Naive thymus-derived CD4-positive, alpha-beta T cell (primary cell): ENCODE measurements at regions of chr2 and their contacts with region 1.

Region 1: GRCh38 chr2:71226965-71227560 is at the start of gene PAIP2B:
- DNase-seq: peak; percentile 88 to 99 (median 99)
- ATAC-seq: peak; percentile 95
- H3K4me3 ChIP-seq: peak within 1 kb of the TSS; percentile 80
- H3K4me3 Mint-ChIP-seq: peak within 1 kb of the TSS; percentile 92 to 99 (median 97)
- H3K27ac ChIP-seq: peak within 1 kb of the TSS; percentile 82
- H3K27ac Mint-ChIP-seq: peak within 1 kb of the TSS; percentile 84 to 98 (median 92)
- H3K4me1 ChIP-seq: peaks cover 8 to 11% of the 10 kb centered on the region in 2 donors
- H3K4me1 Mint-ChIP-seq: peaks cover 13 to 34% (median 22%) of the 10 kb centered on the region in 7 donors
- H3K27me3 ChIP-seq: no peaks in the 10 kb centered on the region
- H3K27me3 Mint-ChIP-seq: peaks cover 0 to 28% (median 6%) of the 10 kb centered on the region in 5 donors
- total RNA-seq, gene PAIP2B: 1.3 to 14.1 (median 5.0) TPM

Region 2: DNA sequence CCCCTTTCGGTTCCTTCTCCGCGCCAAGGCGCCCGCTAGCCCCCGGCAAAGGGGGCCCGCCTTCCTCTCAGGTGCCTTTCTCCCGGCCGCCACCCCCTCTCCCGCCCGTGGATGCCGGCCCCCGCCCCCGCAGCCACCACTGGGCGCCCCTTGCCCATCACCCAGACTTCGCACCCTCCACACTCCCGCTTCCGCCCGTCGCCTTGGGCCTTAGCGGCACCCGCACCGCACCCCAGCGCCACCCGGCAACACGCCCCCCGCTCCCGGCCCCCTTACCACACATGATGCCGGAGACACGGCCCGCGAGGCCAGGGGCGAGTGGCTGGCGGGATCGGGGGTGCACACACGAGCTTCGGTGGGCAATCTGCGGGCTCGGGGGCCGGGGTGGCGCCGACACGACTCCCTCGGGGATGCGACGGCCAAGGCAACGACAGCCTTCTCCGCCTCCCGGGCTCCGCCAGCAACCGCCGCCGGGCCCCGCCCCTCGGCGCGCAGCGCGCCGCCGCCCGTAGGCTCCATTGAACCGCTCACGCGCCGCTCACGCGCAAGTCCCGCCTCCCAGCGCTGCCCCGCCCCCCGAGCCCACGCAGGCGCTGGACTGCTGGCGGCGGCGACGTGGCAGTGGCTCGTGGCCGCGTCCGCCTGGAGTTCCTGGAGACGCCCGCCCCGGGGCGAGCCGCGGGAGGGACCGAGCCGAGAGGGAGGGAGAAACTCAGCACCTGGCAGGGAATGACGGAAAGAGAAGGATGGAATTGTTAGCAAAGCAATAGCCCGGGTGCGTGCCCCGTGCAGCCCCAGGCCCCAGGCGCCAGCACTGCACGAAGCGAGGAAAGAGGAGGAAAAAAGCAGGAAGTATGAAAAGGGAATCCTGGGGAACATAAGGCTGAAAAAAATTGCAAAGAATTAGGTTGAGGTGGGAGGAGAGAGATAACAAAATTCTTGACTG is 1840.0 kb before region 1 on chr2 and contains the start of gene GFPT1:
- CTCF ChIA-PET with region 1: no interaction called
- POLR2A ChIA-PET with region 1: no interaction called
- intact Hi-C with region 1: loop called in 1 of 2 experiments (anchors 2 kb)
- DNase-seq: peak; percentile 85 to 96 (median 91)
- ATAC-seq: peak; percentile 99
- H3K4me3 ChIP-seq: peak within 1 kb of the TSS; percentile 68
- H3K4me3 Mint-ChIP-seq: peak within 1 kb of the TSS; percentile 84 to 94 (median 88)
- H3K27ac ChIP-seq: peak within 1 kb of the TSS; percentile 83
- H3K27ac Mint-ChIP-seq: peak within 1 kb of the TSS; percentile 63 to 94 (median 86)
- H3K4me1 ChIP-seq: peaks cover 17 to 18% of the 10 kb centered on the region in 2 donors
- H3K4me1 Mint-ChIP-seq: peaks cover 28 to 53% (median 41%) of the 10 kb centered on the region in 7 donors
- H3K27me3 ChIP-seq: no peaks in the 10 kb centered on the region
- H3K27me3 Mint-ChIP-seq: no peaks in the 10 kb centered on the region
- total RNA-seq, gene GFPT1: 12.8 to 29.8 (median 16.6) TPM

Region 3: GRCh38 chr2:70977605-70978205 is 249.4 kb before region 1 on chr2:
- CTCF ChIA-PET with region 1: no interaction called
- POLR2A ChIA-PET with region 1: no interaction called
- intact Hi-C with region 1: loop called in 1 of 2 experiments (anchors 5 kb)
- DNase-seq: peak in 5 of 9 donors; percentile 25 to 42 (median 29)
- ATAC-seq: peak; percentile 28
- H3K4me3 ChIP-seq: peak overlapping the region; percentile 81
- H3K4me3 Mint-ChIP-seq: peak overlapping the region; percentile 76 to 95 (median 86)
- H3K27ac ChIP-seq: peak overlapping the region; percentile 36
- H3K27ac Mint-ChIP-seq: peak overlapping the region; percentile 60 to 93 (median 83)
- H3K4me1 ChIP-seq: peaks cover 9% of the 10 kb centered on the region in 2 donors
- H3K4me1 Mint-ChIP-seq: peaks cover 8 to 23% (median 16%) of the 10 kb centered on the region in 7 donors
- H3K27me3 ChIP-seq: no peaks in the 10 kb centered on the region
- H3K27me3 Mint-ChIP-seq: peaks cover 0 to 22% (median 2%) of the 10 kb centered on the region in 5 donors

Region 4: DNA sequence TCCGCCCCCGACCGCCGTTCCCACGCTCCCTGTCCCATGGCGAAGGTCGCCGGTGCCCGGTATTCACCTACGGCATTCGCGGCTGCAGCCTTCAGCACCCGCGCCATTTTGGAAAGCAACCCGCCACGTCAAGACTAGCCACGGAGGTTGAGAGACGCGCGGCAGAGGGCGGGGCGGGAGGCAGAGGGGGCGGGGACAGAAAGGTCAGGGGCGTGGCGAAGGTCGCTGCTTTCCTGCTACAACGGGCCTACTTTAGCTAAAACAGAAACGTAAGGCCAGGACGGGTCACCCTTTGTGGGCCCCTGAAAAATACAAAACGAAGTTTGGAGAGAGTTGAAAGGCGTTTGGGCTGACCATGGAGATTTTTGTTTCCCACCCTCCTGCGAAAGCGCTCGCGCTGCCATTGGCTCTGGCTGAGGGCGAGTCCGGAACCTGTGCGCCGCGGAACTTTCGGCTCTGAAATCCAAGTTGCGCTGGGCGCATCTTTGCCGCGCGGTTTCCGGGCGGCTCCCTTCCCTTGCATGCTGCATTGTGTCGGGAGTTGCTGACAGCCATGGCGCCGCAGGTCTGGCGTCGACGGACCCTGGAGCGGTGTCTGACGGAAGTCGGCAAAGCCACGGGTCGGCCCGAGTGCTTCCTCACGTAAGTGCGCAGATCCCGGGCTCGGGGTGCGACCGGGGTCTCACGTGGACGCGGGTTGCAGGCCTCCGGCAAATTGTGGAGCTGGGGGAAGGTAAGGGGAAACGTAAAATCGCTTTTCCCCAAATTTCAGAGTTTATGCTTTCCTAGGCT is 96.8 kb before region 1 on chr2 and contains the starts of genes MCEE and MPHOSPH10:
- CTCF ChIA-PET with region 1: interaction called, 4 read pairs
- POLR2A ChIA-PET with region 1: interaction called, 15 read pairs
- intact Hi-C with region 1: loop called (anchors 1 kb)
- DNase-seq: peak; percentile 81 to 91 (median 89)
- ATAC-seq: peak; percentile 95
- H3K4me3 ChIP-seq: peak within 1 kb of the TSS; percentile 74
- H3K4me3 Mint-ChIP-seq: no peak within 1 kb of the TSS
- H3K27ac ChIP-seq: peak within 1 kb of the TSS; percentile 87
- H3K27ac Mint-ChIP-seq: peak within 1 kb of the TSS in 1 of 9 donors; percentile 45
- H3K4me1 ChIP-seq: peaks cover 21 to 22% of the 10 kb centered on the region in 2 donors
- H3K4me1 Mint-ChIP-seq: peaks cover 5 to 33% (median 26%) of the 10 kb centered on the region in 7 donors
- H3K27me3 ChIP-seq: no peaks in the 10 kb centered on the region
- H3K27me3 Mint-ChIP-seq: no peaks in the 10 kb centered on the region
- total RNA-seq, gene MCEE: 11.6 to 27.9 (median 16.4) TPM
- total RNA-seq, gene MPHOSPH10: 28.2 to 58.9 (median 43.8) TPM

Region 5: DNA sequence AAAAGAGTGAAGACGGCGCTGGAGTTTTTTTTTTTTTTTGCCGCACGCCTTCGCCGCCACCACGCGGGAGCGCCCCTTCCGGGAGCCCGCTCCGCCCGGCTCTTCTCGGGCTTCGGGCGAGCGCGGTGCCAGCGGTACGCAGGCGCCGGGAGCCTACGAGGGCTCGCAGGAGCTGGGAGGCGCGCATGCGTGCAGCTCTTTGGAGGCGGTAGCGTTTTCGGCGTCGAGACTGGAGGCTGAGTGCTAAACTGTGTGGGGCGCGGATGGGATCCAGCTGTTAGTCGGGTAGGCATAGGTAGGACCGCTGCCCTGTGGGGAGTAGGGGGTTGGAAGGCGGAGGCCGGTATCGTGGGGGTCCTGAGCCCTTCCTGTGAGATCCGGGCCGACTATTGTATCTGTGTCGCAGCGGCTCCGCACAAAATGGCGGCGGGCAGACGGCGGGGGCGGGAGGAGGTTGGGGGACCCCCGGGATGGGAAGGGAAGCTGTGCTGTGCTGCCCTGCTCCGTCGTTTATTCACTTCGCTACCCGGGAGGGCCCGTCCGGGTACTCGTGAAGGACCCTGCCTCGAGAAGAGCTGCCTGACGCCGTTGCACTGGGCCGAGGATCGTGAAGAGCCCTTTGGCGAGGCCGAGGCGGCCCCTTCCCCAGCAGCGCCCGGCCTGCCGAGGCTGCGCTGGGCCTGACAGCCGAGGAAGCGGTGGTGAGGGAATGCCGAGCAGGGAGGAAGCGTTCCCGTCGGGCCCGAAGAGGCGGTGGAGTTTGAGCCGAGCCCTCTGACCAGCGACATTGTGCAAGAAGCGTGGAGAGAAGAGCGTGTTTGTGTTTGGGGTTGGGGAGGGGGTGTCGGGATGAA is 104.7 kb after region 1 on chr2 and contains the start of gene ZNF638:
- CTCF ChIA-PET with region 1: no interaction called
- POLR2A ChIA-PET with region 1: interaction called, 21 read pairs
- intact Hi-C with region 1: loop called (anchors 1 kb)
- DNase-seq: peak; percentile 89 to 94 (median 93)
- ATAC-seq: peak; percentile 98
- H3K4me3 ChIP-seq: peak within 1 kb of the TSS; percentile 79
- H3K4me3 Mint-ChIP-seq: peak within 1 kb of the TSS; percentile 95 to 100 (median 99)
- H3K27ac ChIP-seq: peak within 1 kb of the TSS; percentile 99
- H3K27ac Mint-ChIP-seq: peak within 1 kb of the TSS; percentile 97 to 100 (median 100)
- H3K4me1 ChIP-seq: peaks cover 25 to 29% of the 10 kb centered on the region in 2 donors
- H3K4me1 Mint-ChIP-seq: peaks cover 19 to 56% (median 40%) of the 10 kb centered on the region in 7 donors
- H3K27me3 ChIP-seq: no peaks in the 10 kb centered on the region
- H3K27me3 Mint-ChIP-seq: peaks cover 0 to 20% (median 5%) of the 10 kb centered on the region in 5 donors
- total RNA-seq, gene ZNF638: 113 to 204 (median 121) TPM

Region 6: DNA sequence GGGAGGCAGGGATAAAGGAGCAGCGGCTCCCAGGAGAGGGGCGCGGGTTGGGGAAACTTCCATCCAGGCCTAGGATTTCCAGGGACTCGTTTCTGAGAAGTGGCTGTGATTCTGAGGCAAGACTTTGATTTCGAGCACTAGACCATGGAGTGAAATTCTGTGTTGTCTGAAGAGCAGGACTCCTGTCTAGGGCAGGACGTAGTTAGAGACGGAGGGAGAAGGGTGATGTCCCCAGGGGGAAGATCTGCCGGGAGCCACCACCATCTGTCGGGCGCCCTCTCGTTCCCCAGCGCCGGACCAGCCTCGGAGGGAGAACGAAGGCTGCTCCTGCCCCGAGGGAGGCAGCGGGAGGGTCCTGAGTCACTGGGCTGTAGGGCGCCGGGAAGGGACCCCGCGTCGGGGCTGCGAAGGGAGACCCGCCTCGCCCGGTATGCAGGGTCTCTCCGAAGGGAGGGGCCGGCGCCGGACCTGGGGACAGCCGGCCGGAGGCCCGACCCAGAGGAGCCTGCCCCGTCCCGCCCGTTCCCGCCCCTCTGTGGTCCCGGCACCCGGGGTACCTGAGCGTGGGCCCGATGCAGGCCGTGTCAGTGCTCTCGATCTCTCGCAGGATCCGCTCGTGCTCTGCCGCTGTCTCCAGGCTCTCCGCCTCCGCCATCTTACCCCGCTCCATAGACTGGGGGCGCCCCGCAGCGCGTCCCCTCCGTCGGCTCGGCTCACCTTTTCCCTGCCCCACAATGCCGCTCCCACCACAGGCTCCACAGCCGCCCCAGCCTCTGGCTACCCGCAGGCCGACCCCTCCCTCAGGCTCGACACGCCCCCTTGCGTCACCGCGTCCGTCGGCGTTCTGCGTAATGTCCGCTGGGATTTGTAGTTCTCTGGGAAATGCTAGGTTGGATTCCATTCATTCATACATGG is 1598.4 kb after region 1 on chr2 and contains the start of gene EXOC6B:
- CTCF ChIA-PET with region 1: no interaction called
- POLR2A ChIA-PET with region 1: no interaction called
- intact Hi-C with region 1: loop called in 1 of 2 experiments (anchors 2 kb)
- DNase-seq: peak; percentile 78 to 87 (median 84)
- ATAC-seq: peak; percentile 96
- H3K4me3 ChIP-seq: peak within 1 kb of the TSS; percentile 70
- H3K4me3 Mint-ChIP-seq: peak within 1 kb of the TSS; percentile 88 to 99 (median 98)
- H3K27ac ChIP-seq: peak within 1 kb of the TSS; percentile 69
- H3K27ac Mint-ChIP-seq: peak within 1 kb of the TSS; percentile 70 to 96 (median 92)
- H3K4me1 ChIP-seq: peaks cover 14 to 19% of the 10 kb centered on the region in 2 donors
- H3K4me1 Mint-ChIP-seq: peaks cover 24 to 48% (median 45%) of the 10 kb centered on the region in 7 donors
- H3K27me3 ChIP-seq: no peaks in the 10 kb centered on the region
- H3K27me3 Mint-ChIP-seq: peaks cover 0 to 12% (median 5%) of the 10 kb centered on the region in 5 donors
- total RNA-seq, gene EXOC6B: 14.3 to 21.9 (median 18.0) TPM